ENCODE measurements at regions of chr1 and their contacts with region 1.

Region 1: DNA sequence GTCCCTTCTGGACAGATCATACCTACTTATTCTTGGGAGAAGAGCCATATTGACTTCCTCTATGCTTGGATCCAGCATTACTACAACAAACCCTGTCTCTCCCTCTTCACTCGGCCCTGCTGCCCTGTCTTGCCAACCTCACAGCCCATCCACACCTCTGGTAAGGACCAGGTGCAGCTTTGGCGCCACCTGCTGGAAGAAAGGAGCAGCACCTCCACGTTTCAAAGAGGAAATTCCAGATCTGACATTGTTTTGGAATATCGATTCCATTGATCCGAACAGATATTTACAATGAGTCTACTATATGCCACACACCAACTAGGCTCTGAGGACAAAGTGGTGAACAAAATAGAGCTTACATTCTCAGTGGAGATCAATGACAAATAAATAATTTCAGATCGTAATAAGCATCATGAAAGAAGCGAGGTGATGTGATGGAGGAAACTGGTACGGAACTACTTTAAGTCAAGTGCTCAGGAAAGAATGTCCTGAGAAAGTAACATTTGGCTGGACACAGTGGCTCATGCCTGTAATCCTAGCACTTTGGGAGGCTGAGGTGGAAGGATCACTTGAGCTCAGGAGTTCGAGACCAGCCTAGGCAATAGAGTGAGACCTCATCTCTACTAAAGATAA is 18.7 kb downstream of the MFSD2A start:
- DNase-seq: peak; percentile 84
- H3K4me3 ChIP-seq: no peak overlapping the region
- H3K27ac ChIP-seq: no peak overlapping the region
- H3K4me1 ChIP-seq: peaks cover 0 to 6% (median 2%) of the 10 kb centered on the region in 4 donors
- H3K27me3 ChIP-seq: no peaks in the 10 kb centered on the region
- CTCF ChIP-seq: peak; percentile 95 to 97 (median 96)
- EP300 ChIP-seq: no peak
- POLR2A ChIP-seq: no peak

Region 2: DNA sequence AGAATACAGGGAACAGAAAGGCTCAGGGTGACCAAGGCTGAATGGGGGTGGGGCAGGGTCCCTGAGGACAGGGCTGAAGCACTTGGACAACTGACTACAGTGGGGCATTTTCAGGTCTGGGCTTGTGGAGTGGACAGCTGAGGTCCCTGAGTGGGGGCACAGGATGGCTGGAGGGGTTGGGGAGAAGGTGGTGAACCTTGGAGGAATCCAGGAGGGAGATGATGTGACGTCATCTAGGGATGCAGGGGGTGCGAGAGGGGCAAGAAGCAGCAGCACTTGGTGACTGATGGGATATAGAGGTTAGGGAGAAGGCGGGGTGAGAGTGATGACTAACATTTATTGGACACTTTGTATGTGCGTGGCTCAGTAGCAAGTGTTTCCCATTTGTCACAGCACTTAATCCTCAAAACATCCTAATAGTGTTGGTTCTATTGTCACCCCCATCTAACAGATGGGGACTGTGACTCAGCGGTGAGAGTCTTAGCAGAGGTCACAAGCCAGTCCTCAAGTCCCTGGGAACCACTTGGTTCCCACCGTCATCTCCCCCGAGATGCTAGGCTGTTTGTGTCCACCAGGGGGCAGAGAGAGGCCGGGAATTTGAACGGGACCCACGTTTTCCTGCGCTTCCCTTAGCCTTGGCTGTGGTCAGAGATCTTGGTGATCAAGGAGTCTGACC is 157.1 kb before region 1 on chr1:
- in situ Hi-C with region 1: loop called (anchors 5 to 10 kb)
- intact Hi-C with region 1: loop called (anchors 2 kb)
- DNase-seq: peak; percentile 77
- H3K4me3 ChIP-seq: no peak overlapping the region
- H3K27ac ChIP-seq: peak overlapping the region; percentile 84 to 90 (median 86)
- H3K4me1 ChIP-seq: peaks cover 9 to 29% (median 26%) of the 10 kb centered on the region in 4 donors
- H3K27me3 ChIP-seq: no peaks in the 10 kb centered on the region
- CTCF ChIP-seq: peak; percentile 77 to 99 (median 85)
- EP300 ChIP-seq: no peak
- POLR2A ChIP-seq: no peak

Region 3: GRCh38 chr1:39825432-39825951 is 148.1 kb before region 1 on chr1:
- in situ Hi-C with region 1: loop called in 1 of 4 experiments (anchors 5 kb)
- intact Hi-C with region 1: no loop called
- DNase-seq: peak; percentile 72
- H3K4me3 ChIP-seq: no peak overlapping the region
- H3K27ac ChIP-seq: peak overlapping the region; percentile 59 to 79 (median 76)
- H3K4me1 ChIP-seq: peaks cover 5 to 36% (median 23%) of the 10 kb centered on the region in 4 donors
- H3K27me3 ChIP-seq: no peaks in the 10 kb centered on the region
- CTCF ChIP-seq: no peak
- EP300 ChIP-seq: no peak
- POLR2A ChIP-seq: peak; percentile 37

Region 4: DNA sequence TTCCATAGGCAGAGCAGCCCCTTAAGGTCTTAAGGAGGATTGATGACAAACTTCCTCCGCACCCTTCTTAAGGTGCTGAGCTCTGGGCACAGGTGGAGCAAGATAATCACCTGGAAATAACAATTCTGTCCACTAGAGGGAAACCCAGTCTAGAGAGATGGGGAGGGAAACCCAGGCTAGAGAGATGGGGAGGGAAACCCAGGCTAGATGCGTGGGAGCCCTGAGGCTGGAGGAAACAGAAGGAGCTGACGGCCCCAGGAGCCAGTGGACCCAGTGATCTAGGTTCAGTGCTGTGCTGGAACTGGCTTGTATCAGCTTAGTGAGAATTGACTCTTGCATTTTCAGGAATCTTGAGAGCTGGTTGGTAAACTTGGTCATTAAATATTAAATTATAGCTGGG is 54.1 kb before region 1 on chr1:
- in situ Hi-C with region 1: loop called in 3 of 4 experiments (anchors 5 to 10 kb)
- intact Hi-C with region 1: loop called (anchors 5 kb)
- DNase-seq: peak; percentile 56
- H3K4me3 ChIP-seq: no peak overlapping the region
- H3K27ac ChIP-seq: no peak overlapping the region
- H3K4me1 ChIP-seq: no peaks in the 10 kb centered on the region
- H3K27me3 ChIP-seq: peaks cover 6% of the 10 kb centered on the region
- CTCF ChIP-seq: peak; percentile 54 to 85 (median 63)
- EP300 ChIP-seq: no peak
- POLR2A ChIP-seq: no peak

Region 5: GRCh38 chr1:39926343-39926793 is 47.3 kb before region 1 on chr1:
- in situ Hi-C with region 1: loop called in 2 of 4 experiments (anchors 5 to 10 kb)
- intact Hi-C with region 1: no loop called
- DNase-seq: no peak
- H3K4me3 ChIP-seq: no peak overlapping the region
- H3K27ac ChIP-seq: no peak overlapping the region
- H3K4me1 ChIP-seq: peaks cover 5 to 17% (median 7%) of the 10 kb centered on the region in 4 donors
- H3K27me3 ChIP-seq: peaks cover 4% of the 10 kb centered on the region
- CTCF ChIP-seq: no peak
- EP300 ChIP-seq: no peak
- POLR2A ChIP-seq: no peak

Region 6: DNA sequence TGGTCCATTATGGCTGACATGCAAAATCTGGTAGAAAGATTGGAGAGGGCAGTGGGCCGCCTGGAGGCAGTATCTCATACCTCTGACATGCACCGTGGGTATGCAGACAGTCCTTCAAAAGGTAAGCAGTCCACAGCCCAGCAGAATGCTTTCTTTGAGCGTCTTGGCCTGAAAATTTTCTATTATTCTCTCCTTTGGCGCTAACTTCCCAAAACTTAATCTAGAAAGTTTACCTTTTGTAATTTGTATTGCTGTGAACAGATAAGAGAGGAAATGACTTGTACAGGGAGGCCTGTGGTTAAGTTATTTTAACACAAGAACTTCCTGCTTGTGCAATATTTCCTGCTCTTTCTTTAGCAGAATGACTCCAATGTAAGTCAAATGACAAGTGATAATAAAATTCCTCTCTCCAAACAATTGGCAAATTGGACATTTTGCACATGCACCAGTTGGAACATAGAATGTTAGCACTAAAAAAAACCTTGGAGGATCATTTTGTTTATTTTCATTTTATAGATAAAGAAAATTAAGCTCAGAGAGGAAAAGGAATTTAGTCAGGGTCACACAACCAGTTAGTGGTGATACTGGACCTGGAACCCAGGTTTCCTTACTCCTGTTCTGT is 85.8 kb after region 1 on chr1:
- in situ Hi-C with region 1: no loop called
- intact Hi-C with region 1: no loop called
- DNase-seq: peak; percentile 33
- H3K4me3 ChIP-seq: peak overlapping the region in 1 of 4 donors; percentile 5
- H3K27ac ChIP-seq: peak overlapping the region; percentile 78 to 80 (median 80)
- H3K4me1 ChIP-seq: peaks cover 26 to 84% (median 46%) of the 10 kb centered on the region in 4 donors
- H3K27me3 ChIP-seq: no peaks in the 10 kb centered on the region
- CTCF ChIP-seq: no peak
- EP300 ChIP-seq: no peak
- POLR2A ChIP-seq: no peak